HepG2 (cell line): ENCODE measurements at regions of chr7 and their contacts with region 1.

Region 1: DNA sequence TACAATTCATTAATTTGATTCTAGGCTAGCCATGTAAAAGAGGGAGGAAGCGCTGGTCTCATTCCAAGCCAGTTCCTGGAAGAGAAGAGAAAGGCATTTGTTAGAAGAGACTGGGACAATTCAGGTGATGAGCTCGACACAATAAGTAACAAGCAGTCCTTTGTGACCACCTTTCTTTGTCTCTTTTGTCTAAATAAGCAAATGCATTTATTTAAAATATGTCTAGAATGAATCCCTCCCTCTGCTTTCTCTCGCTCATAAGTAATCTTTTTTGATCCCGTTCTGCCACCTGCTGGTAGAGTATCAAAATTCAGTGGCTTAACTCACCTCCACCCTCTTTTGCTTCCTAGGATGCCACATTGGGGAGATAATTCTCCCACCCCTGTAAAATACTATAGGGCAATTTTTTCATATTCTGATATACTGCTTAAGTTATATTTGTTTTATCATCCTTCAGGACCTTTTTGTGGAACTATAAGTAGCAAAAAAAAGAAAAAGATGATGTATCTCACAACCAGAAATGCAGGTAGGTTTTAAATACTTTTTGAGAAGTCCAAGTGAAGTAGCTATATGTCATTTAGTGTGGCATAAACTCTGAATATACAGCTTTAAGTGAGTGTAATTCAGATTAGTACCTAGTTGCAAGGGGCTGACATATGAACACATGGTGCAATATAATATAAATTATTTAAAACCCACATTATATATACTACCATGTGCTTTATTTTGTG is 91.5 kb downstream of the GSDME start:
- DNase-seq: peak; percentile 53
- ATAC-seq: peak; percentile 76
- H3K4me3 ChIP-seq: no peak overlapping the region
- H3K27ac ChIP-seq: no peak overlapping the region
- H3K4me1 ChIP-seq: no peaks in the 10 kb centered on the region
- H3K27me3 ChIP-seq: no peaks in the 10 kb centered on the region; a peak in 1 of 5 replicates
- CTCF ChIP-seq: peak; percentile 69
- EP300 ChIP-seq: no peak
- POLR2A ChIP-seq: no peak
- RAD21 ChIP-seq: no peak

Region 2: GRCh38 chr7:23863209-23863798 is 802.4 kb before region 1 on chr7:
- CTCF ChIA-PET with region 1: no interaction called
- POLR2A ChIA-PET with region 1: no interaction called
- in situ Hi-C with region 1: no loop called
- intact Hi-C with region 1: loop called (anchors 2 kb)
- DNase-seq: peak; percentile 16
- ATAC-seq: 0 out of 3 replicates have a peak, but pooled peaks have one; percentile 41
- H3K4me3 ChIP-seq: no peak overlapping the region
- H3K27ac ChIP-seq: no peak overlapping the region
- H3K4me1 ChIP-seq: no peaks in the 10 kb centered on the region
- H3K27me3 ChIP-seq: no peaks in the 10 kb centered on the region
- CTCF ChIP-seq: peak; percentile 58
- EP300 ChIP-seq: no peak
- POLR2A ChIP-seq: no peak
- RAD21 ChIP-seq: no peak

Region 3: GRCh38 chr7:23938937-23939552 is 726.7 kb before region 1 on chr7:
- CTCF ChIA-PET with region 1: interaction called, 5 read pairs
- POLR2A ChIA-PET with region 1: no interaction called
- in situ Hi-C with region 1: no loop called
- intact Hi-C with region 1: loop called (anchors 5 kb)
- DNase-seq: peak; percentile 33
- ATAC-seq: peak; percentile 100
- H3K4me3 ChIP-seq: no peak overlapping the region
- H3K27ac ChIP-seq: no peak overlapping the region
- H3K4me1 ChIP-seq: no peaks in the 10 kb centered on the region
- H3K27me3 ChIP-seq: no peaks in the 10 kb centered on the region
- CTCF ChIP-seq: peak; percentile 85
- EP300 ChIP-seq: no peak
- POLR2A ChIP-seq: no peak
- RAD21 ChIP-seq: peak; percentile 55; the same call in 1 of the 2 replicates

Region 4: DNA sequence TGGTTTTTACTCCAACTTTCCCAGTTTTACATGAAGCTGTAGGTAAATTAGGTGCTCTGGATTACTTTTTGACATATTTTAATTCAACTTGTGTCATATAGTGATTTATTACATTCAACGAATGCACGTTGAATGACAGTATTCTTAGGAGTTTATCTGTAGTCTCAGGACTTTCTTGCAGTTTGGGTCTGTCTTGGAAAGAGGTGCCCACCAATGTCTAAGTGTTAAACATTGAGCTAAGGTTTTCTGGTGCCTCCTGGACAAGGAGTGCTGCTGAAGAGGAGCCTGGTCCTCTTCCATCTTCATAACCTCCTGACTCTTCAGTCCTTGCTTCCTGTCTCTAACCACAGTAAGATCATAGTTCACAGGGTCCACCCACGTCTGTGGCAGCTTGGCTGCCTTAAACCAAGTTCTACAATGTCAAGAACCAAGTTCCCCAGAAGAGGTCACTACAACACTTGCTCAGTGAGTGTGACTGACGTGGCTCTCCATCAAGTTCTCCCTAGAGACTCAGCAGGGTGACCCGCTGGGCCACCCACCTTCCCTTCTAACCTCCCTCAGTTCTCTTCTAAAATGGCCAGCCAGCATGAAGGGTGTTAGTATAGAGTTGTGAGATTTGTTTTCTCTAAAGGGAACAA is 375.6 kb before region 1 on chr7:
- CTCF ChIA-PET with region 1: interaction called, 14 read pairs
- POLR2A ChIA-PET with region 1: no interaction called
- in situ Hi-C with region 1: loop called (anchors 10 kb)
- intact Hi-C with region 1: loop called (anchors 2 kb)
- DNase-seq: peak; percentile 60
- ATAC-seq: peak; percentile 97
- H3K4me3 ChIP-seq: no peak overlapping the region
- H3K27ac ChIP-seq: no peak overlapping the region
- H3K4me1 ChIP-seq: no peaks in the 10 kb centered on the region
- H3K27me3 ChIP-seq: peaks cover 2 to 8% of the 10 kb centered on the region in 2 experiments; a peak in 2 of 5 replicates
- CTCF ChIP-seq: peak; percentile 75
- EP300 ChIP-seq: no peak
- POLR2A ChIP-seq: no peak
- RAD21 ChIP-seq: peak; percentile 42; the same call in 1 of the 2 replicates

Region 5: DNA sequence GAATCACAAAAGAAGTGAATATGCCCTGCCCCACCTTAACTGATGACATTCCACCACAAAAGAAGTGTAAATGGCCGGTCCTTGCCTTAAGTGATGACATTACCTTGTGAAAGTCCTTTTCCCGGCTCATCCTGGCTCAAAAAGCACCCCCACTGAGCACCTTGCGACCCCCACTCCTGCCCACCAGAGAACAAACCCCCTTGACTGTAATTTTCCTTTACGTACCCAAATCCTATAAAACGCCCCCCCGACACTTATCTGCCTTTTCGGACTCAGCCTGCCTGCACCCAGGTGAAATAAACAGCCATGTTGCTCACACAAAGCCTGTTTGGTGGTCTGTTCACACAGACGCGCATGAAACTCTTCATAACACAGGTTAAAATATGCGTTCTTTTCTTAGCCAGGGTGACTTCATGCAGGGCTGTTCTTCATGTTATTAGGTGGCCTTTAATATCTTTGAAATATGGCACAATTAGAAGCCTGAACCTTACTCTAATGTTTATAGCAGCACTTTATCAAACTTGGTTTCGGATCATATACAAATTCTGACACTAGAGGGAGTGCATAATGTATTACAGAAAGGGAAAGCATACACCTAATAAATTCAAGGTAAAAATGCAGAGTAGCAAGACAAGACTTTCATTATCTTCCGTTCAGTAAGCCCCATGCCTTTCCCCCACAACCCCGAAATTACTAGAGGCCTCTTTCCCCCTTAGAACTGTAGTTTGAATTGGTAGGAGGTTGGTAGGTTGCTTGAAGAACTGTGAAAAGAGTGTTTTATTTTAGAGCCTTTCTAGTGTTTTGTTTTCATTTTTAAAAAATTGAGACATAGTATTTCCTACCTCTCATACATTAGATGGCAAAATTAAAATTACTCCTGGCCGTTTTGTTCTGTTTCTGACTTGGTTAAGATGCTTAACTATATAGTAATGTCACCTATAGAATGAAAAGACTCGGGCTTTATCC is 263.8 kb before region 1 on chr7:
- CTCF ChIA-PET with region 1: interaction called, 10 read pairs
- POLR2A ChIA-PET with region 1: no interaction called
- in situ Hi-C with region 1: loop called (anchors 5 kb)
- intact Hi-C with region 1: loop called (anchors 2 kb)
- DNase-seq: peak; percentile 31
- ATAC-seq: peak; percentile 56; the same call in 2 of the 3 replicates
- H3K4me3 ChIP-seq: no peak overlapping the region
- H3K27ac ChIP-seq: no peak overlapping the region
- H3K4me1 ChIP-seq: no peaks in the 10 kb centered on the region
- H3K27me3 ChIP-seq: no peaks in the 10 kb centered on the region
- CTCF ChIP-seq: peak; percentile 50
- EP300 ChIP-seq: no peak
- POLR2A ChIP-seq: no peak
- RAD21 ChIP-seq: no peak; the same call in 1 of the 2 replicates

Region 6: DNA sequence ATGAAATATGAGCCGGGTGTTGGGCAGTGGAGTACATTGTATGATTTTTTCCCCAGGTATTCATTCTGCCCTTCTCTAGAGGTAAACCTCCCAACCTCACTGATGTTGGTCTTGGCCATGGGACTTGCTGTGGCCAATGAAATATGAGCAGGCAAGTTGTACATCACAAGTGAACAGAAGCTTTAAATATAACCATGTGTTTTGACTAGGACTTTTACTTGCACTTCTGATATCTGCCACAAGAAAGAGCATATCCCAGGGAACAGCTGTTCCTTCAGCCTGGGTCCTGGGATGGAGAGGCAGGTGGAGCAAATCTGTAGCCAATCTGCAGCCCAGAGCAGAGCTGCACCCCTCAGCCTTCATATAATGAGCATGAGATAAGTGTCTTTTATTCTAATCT is 202.3 kb before region 1 on chr7:
- CTCF ChIA-PET with region 1: no interaction called
- POLR2A ChIA-PET with region 1: no interaction called
- in situ Hi-C with region 1: no loop called
- intact Hi-C with region 1: loop called (anchors 10 kb)
- DNase-seq: no peak
- ATAC-seq: no peak
- H3K4me3 ChIP-seq: no peak overlapping the region
- H3K27ac ChIP-seq: no peak overlapping the region
- H3K4me1 ChIP-seq: peaks cover 13% of the 10 kb centered on the region
- H3K27me3 ChIP-seq: no peaks in the 10 kb centered on the region
- CTCF ChIP-seq: no peak
- EP300 ChIP-seq: no peak
- POLR2A ChIP-seq: no peak
- RAD21 ChIP-seq: no peak

Region 7: DNA sequence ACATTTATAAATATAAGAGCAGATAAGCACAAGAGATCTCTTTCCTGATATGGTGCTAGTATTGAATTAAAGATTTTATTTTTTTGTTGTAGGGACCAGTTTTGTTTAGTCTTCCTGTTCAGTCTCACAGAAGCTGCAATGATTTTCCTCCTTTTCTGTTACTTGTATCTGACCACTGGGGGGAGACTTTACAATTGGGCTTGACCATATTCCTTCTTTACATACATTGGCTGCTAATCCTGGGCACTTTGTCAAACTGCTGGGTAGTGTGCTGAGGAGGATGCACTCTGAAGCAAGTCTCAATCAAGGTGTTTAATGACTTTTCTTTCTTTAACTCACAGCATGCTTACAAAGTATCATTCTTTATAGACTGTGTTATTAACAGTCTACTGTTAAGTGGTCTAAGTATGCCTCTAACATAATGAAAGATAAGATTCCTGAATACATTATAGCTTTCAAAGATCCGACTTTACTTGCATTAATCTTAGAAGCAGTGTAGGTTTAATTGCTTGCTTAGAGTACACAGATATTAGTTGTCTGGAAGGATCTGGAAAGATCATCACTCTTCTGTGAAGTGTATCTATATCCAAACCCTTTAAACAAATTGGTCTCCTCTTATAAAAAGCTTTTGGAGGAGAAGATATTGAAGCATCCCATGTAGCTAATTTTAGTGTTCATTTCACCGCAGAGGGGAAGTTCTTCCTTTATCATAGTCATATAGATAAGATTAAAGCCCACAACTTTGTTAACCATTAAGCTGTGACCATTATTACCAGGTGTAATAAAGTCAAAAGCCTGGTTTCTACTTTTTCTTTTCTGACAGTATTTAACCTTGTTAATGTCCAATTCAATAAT is 89.3 kb before region 1 on chr7:
- CTCF ChIA-PET with region 1: interaction called, 4 read pairs
- POLR2A ChIA-PET with region 1: no interaction called
- in situ Hi-C with region 1: no loop called
- intact Hi-C with region 1: loop called (anchors 2 kb)
- DNase-seq: peak; percentile 56
- ATAC-seq: peak; percentile 21; the same call in 1 of the 3 replicates
- H3K4me3 ChIP-seq: no peak overlapping the region
- H3K27ac ChIP-seq: no peak overlapping the region
- H3K4me1 ChIP-seq: peaks cover 36% of the 10 kb centered on the region
- H3K27me3 ChIP-seq: peaks cover 0 to 14% of the 10 kb centered on the region in 2 experiments; a peak in 4 of 5 replicates
- CTCF ChIP-seq: peak; percentile 75
- EP300 ChIP-seq: no peak
- POLR2A ChIP-seq: no peak
- RAD21 ChIP-seq: 0 out of 2 replicates have a peak, but pooled peaks have one; percentile 24

Region 8: GRCh38 chr7:24637706-24638105 is 28.0 kb before region 1 on chr7:
- CTCF ChIA-PET with region 1: no interaction called
- POLR2A ChIA-PET with region 1: no interaction called
- in situ Hi-C with region 1: no loop called
- intact Hi-C with region 1: no loop called
- DNase-seq: no peak
- ATAC-seq: no peak
- H3K4me3 ChIP-seq: no peak overlapping the region
- H3K27ac ChIP-seq: no peak overlapping the region
- H3K4me1 ChIP-seq: no peaks in the 10 kb centered on the region
- H3K27me3 ChIP-seq: no peaks in the 10 kb centered on the region
- CTCF ChIP-seq: no peak
- EP300 ChIP-seq: no peak
- POLR2A ChIP-seq: no peak
- RAD21 ChIP-seq: no peak

Region 9: GRCh38 chr7:24653316-24654085 is 12.2 kb before region 1 on chr7:
- CTCF ChIA-PET with region 1: no interaction called
- POLR2A ChIA-PET with region 1: no interaction called
- in situ Hi-C with region 1: no loop called
- intact Hi-C with region 1: no loop called
- DNase-seq: no peak
- ATAC-seq: no peak
- H3K4me3 ChIP-seq: no peak overlapping the region
- H3K27ac ChIP-seq: no peak overlapping the region
- H3K4me1 ChIP-seq: no peaks in the 10 kb centered on the region
- H3K27me3 ChIP-seq: no peaks in the 10 kb centered on the region
- CTCF ChIP-seq: no peak
- EP300 ChIP-seq: no peak
- POLR2A ChIP-seq: no peak
- RAD21 ChIP-seq: no peak